ENCODE measurements at regions of chr2 and their contacts with region 1.

Region 1: DNA sequence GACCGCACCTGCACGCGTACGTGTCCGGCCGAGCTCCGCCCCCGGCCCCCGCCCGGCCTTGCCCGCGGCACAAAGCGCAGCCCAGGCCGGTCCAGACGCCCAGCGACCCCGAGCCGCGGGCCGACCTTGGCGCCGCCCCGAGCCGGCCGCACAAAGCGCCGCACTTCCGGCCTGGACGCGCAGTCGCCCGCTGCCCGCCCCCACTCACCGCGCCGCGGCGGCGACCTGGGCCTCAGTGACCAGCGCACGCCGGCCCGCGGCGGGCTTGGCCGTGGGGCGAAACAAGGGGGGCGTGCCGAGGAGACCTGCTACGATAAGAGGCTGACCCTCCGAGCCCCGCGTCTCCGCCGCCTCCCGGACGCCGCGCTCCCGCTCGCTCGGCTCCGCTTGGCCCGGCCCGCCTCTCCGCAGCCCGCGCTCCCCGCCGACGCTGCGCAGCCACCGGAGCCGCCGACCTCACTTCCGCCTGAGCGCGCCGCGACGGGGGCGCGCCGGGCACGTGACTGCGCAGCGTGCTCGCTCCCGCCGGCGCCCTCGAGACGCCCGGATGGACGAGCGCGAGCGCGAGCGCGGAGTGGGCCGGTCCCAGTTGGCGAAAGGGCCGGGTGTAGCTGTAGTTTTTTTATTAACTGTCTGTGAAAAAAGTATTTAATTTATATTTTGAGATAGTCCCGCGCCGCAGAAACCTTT is at the start of gene FAM168B:
- DNase-seq: peak; percentile 72 to 87
- ATAC-seq: peak; percentile 94 to 95
- H3K4me3 ChIP-seq: peak within 1 kb of the TSS; percentile 54 to 77 (median 75)
- H3K27ac ChIP-seq: peak within 1 kb of the TSS; percentile 82 to 95 (median 88)
- H3K4me1 ChIP-seq: peaks cover 9 to 17% of the 10 kb centered on the region in 2 donors
- H3K27me3 ChIP-seq: no peaks in the 10 kb centered on the region
- CTCF ChIP-seq: peak in 3 of 5 experiments; percentile 10 to 26 (median 22)
- POLR2A ChIP-seq: peak; percentile 99 to 100
- total RNA-seq, gene FAM168B: 147 to 172 (median 157) TPM

Region 2: GRCh38 chr2:131105156-131105949 is 12.2 kb after region 1 on chr2 and contains the start of gene PLEKHB2:
- in situ Hi-C with region 1: no loop called
- intact Hi-C with region 1: loop called (anchors 1 kb)
- DNase-seq: peak; percentile 80 to 87
- ATAC-seq: peak; percentile 71 to 79
- H3K4me3 ChIP-seq: peak within 1 kb of the TSS; percentile 81 to 98 (median 94)
- H3K27ac ChIP-seq: peak within 1 kb of the TSS; percentile 95 to 99 (median 96)
- H3K4me1 ChIP-seq: peaks cover 21 to 29% of the 10 kb centered on the region in 2 donors
- H3K27me3 ChIP-seq: no peaks in the 10 kb centered on the region
- CTCF ChIP-seq: peak in 3 of 5 experiments; percentile 10 to 27 (median 21)
- POLR2A ChIP-seq: peak; percentile 93 to 97
- total RNA-seq, gene PLEKHB2: 24.0 to 105 (median 68.3) TPM

Region 3: GRCh38 chr2:131366643-131367042 is 273.5 kb after region 1 on chr2:
- in situ Hi-C with region 1: no loop called
- intact Hi-C with region 1: no loop called
- DNase-seq: no peak
- ATAC-seq: no peak
- H3K4me3 ChIP-seq: no peak overlapping the region
- H3K27ac ChIP-seq: no peak overlapping the region
- H3K4me1 ChIP-seq: no peaks in the 10 kb centered on the region
- H3K27me3 ChIP-seq: peaks cover 0 to 27% (median 12%) of the 10 kb centered on the region in 3 donors
- CTCF ChIP-seq: no peak
- POLR2A ChIP-seq: no peak

Region 4: DNA sequence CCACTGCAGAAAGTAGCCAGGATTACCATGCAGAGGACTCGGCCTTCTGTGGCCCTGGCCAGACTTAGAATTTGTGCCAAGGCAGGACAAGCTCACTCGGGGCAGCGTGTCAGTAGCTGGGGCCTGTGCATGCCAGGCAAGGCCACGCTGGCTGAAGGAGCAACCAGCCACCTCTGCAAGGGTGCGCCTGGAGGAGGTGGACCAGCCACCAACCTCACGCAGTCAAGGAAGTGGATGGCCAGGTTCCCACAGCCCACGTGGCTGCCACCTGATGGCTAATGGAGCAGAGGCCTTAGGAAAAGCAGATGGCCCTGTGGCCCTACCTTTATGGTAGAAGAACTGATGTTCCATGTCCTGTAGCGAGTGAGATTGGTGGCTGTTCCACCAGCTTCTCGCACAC is 542.5 kb after region 1 on chr2:
- in situ Hi-C with region 1: no loop called
- intact Hi-C with region 1: no loop called
- DNase-seq: no peak
- ATAC-seq: no peak
- H3K4me3 ChIP-seq: no peak overlapping the region
- H3K27ac ChIP-seq: no peak overlapping the region
- H3K4me1 ChIP-seq: no peaks in the 10 kb centered on the region
- H3K27me3 ChIP-seq: no peaks in the 10 kb centered on the region
- CTCF ChIP-seq: no peak
- POLR2A ChIP-seq: no peak

Measured in gastrocnemius medialis (tissue), 4 donors.